CD4-positive, alpha-beta T cell (primary cell): ENCODE measurements at regions of chr9 and their contacts with region 1.

Region 1: GRCh38 chr9:131046581-131047202 is 37.7 kb downstream of the LAMC3 start:
- DNase-seq: peak; percentile 47 to 84 (median 65)
- ATAC-seq: peak; percentile 89
- H3K4me3 ChIP-seq: no peak overlapping the region
- H3K4me3 Mint-ChIP-seq: no peak overlapping the region
- H3K27ac ChIP-seq: no peak overlapping the region
- H3K27ac Mint-ChIP-seq: no peak overlapping the region
- H3K4me1 ChIP-seq: peaks cover 17% of the 10 kb centered on the region
- H3K4me1 Mint-ChIP-seq: peaks cover 20% of the 10 kb centered on the region
- H3K27me3 ChIP-seq: no peaks in the 10 kb centered on the region
- H3K27me3 Mint-ChIP-seq: no peaks in the 10 kb centered on the region
- CTCF ChIP-seq: peak; percentile 90

Region 2: GRCh38 chr9:130461218-130461630 is 585.5 kb before region 1 on chr9:
- CTCF ChIA-PET with region 1: no interaction called
- POLR2A ChIA-PET with region 1: no interaction called
- intact Hi-C with region 1: loop called (anchors 2 to 5 kb)
- DNase-seq: peak; percentile 52 to 82 (median 66)
- ATAC-seq: peak; percentile 55
- H3K4me3 ChIP-seq: no peak overlapping the region
- H3K4me3 Mint-ChIP-seq: no peak overlapping the region
- H3K27ac ChIP-seq: no peak overlapping the region
- H3K27ac Mint-ChIP-seq: no peak overlapping the region
- H3K4me1 ChIP-seq: peaks cover 4% of the 10 kb centered on the region
- H3K4me1 Mint-ChIP-seq: no peaks in the 10 kb centered on the region
- H3K27me3 ChIP-seq: peaks cover 22 to 25% of the 10 kb centered on the region in 2 experiments
- H3K27me3 Mint-ChIP-seq: peaks cover 33% of the 10 kb centered on the region
- CTCF ChIP-seq: peak; percentile 90

Region 3: GRCh38 chr9:130701056-130702022 is 345.4 kb before region 1 on chr9:
- CTCF ChIA-PET with region 1: interaction called, 5 read pairs
- POLR2A ChIA-PET with region 1: no interaction called
- intact Hi-C with region 1: loop called (anchors 1 to 2 kb)
- DNase-seq: peak; percentile 56 to 81 (median 64)
- ATAC-seq: peak; percentile 87
- H3K4me3 ChIP-seq: no peak overlapping the region
- H3K4me3 Mint-ChIP-seq: no peak overlapping the region
- H3K27ac ChIP-seq: no peak overlapping the region
- H3K27ac Mint-ChIP-seq: no peak overlapping the region
- H3K4me1 ChIP-seq: peaks cover under 1% of the 10 kb centered on the region
- H3K4me1 Mint-ChIP-seq: peaks cover 20% of the 10 kb centered on the region
- H3K27me3 ChIP-seq: no peaks in the 10 kb centered on the region
- H3K27me3 Mint-ChIP-seq: no peaks in the 10 kb centered on the region
- CTCF ChIP-seq: peak; percentile 88

Region 4: GRCh38 chr9:130707225-130707976 is 339.3 kb before region 1 on chr9:
- CTCF ChIA-PET with region 1: interaction called, 5 read pairs
- POLR2A ChIA-PET with region 1: no interaction called
- intact Hi-C with region 1: loop called in 1 of 2 experiments (anchors 2 kb)
- DNase-seq: peak; percentile 49 to 88 (median 68)
- ATAC-seq: peak; percentile 63
- H3K4me3 ChIP-seq: no peak overlapping the region
- H3K4me3 Mint-ChIP-seq: no peak overlapping the region
- H3K27ac ChIP-seq: no peak overlapping the region
- H3K27ac Mint-ChIP-seq: peak overlapping the region; percentile 2
- H3K4me1 ChIP-seq: peaks cover 5% of the 10 kb centered on the region
- H3K4me1 Mint-ChIP-seq: peaks cover 12% of the 10 kb centered on the region
- H3K27me3 ChIP-seq: no peaks in the 10 kb centered on the region
- H3K27me3 Mint-ChIP-seq: no peaks in the 10 kb centered on the region
- CTCF ChIP-seq: peak; percentile 87

Region 5: GRCh38 chr9:130962418-130963316 is 84.0 kb before region 1 on chr9:
- CTCF ChIA-PET with region 1: no interaction called
- POLR2A ChIA-PET with region 1: no interaction called
- intact Hi-C with region 1: no loop called
- DNase-seq: no peak
- ATAC-seq: no peak
- H3K4me3 ChIP-seq: no peak overlapping the region
- H3K4me3 Mint-ChIP-seq: no peak overlapping the region
- H3K27ac ChIP-seq: no peak overlapping the region
- H3K27ac Mint-ChIP-seq: no peak overlapping the region
- H3K4me1 ChIP-seq: no peaks in the 10 kb centered on the region
- H3K4me1 Mint-ChIP-seq: no peaks in the 10 kb centered on the region
- H3K27me3 ChIP-seq: peaks cover 0 to 4% of the 10 kb centered on the region in 2 experiments
- H3K27me3 Mint-ChIP-seq: no peaks in the 10 kb centered on the region
- CTCF ChIP-seq: no peak